WTC11 (cell line): ENCODE measurements at regions of chr3 and their contacts with region 1.

Region 1: DNA sequence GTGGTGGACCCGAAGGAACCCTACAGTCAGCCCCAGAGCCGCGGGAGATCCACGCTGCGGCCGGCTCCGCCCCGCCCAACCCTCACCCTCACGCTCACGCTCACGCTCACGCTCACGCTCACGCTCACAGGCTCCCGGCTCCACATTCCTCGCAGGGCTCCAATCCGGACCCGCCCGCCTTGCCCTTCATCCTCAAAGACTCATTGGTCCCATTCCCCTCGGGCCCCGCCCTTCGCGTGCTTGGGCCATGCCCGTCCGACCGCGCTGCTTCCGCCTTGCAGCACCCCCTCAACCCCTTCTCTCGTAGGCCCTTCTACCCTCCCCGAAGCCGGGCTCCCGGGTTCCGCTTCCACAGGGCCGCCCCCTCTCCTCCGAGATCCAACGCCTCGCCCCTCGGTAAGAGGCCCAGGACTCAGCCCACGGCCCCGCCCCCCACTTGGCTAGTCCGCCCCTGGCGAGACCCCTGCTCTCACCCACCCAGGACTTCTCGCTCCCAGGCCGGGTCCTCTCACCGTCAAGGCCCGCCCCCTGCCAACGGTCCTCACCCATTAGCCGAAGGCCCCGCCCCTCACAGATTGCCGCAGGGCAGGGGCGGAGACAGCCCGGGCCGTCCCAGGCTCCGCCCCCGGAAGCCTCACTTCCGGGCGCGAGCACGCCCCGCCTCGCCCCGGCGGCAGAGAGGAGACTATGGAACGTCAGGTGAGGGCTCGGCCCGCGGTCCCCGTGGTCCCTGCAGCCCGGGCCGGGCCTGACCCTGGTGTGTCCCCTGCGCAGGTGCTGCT is at the start of gene APEH:
- DNase-seq: peak; percentile 98
- ATAC-seq: peak; percentile 85
- H3K4me3 Mint-ChIP-seq: peak within 1 kb of the TSS; percentile 81
- H3K27ac Mint-ChIP-seq: peak within 1 kb of the TSS; percentile 94
- H3K4me1 Mint-ChIP-seq: peaks cover 21% of the 10 kb centered on the region
- H3K27me3 Mint-ChIP-seq: no peaks in the 10 kb centered on the region
- CTCF ChIP-seq: no peak
- total RNA-seq, gene APEH: 270 to 276 TPM (median 273 TPM) in 3 replicates

Region 2: DNA sequence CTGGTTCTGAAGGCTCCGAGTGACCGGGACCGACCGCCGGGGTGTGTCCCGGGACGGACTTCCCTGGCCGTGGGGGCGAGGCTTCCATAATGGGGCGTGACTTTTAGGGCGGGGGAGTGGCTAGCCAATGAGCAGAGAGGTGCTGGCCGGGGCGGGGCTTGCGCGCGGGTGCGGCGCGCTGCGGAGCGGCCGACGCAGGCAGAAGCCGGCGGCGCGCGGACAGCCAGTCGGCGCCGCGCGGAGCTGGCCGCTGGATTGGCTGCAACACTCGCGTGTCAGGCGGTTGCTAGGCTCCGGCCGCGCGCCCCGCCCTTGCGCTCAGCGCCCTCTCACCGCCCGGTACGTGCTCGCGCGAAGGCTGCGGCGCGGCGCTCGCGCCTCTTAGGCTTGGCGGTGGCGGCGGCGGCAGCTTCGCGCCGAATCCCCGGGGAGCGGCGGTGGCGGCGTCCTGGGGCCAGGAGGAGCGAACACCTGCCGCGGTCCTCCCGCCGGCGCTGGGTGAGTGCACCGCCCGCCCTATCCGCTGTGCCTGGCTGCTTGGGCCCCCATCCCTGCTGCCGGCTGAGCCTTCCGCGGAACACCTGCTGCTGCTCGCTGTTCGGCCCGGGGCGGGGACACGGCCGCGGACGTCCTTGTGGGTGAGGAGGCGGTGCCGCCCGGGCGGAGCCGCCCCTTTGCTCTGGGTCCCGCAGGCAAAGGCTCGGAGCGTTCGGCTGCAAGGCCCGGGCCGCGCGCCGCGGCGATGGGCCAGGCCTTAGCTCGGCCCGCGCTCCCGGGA is 203.8 kb before region 1 on chr3 and contains the start of gene DAG1:
- CTCF ChIA-PET with region 1: interaction called, 11 read pairs
- POLR2A ChIA-PET with region 1: no interaction called
- DNase-seq: peak; percentile 99
- ATAC-seq: peak; percentile 89
- H3K4me3 Mint-ChIP-seq: peak within 1 kb of the TSS; percentile 95
- H3K27ac Mint-ChIP-seq: peak within 1 kb of the TSS; percentile 100
- H3K4me1 Mint-ChIP-seq: peaks cover 27% of the 10 kb centered on the region
- H3K27me3 Mint-ChIP-seq: no peaks in the 10 kb centered on the region
- CTCF ChIP-seq: no peak
- total RNA-seq, gene DAG1: 113 to 119 TPM (median 115 TPM) in 3 replicates

Region 3: GRCh38 chr3:49534581-49535441 is 139.1 kb before region 1 on chr3:
- CTCF ChIA-PET with region 1: interaction called, 304 read pairs
- POLR2A ChIA-PET with region 1: interaction called, 27 read pairs
- DNase-seq: peak; percentile 73
- ATAC-seq: peak; percentile 9
- H3K4me3 Mint-ChIP-seq: no peak overlapping the region
- H3K27ac Mint-ChIP-seq: peak overlapping the region; percentile 41; the same call in 1 of the 2 replicates
- H3K4me1 Mint-ChIP-seq: peaks cover 17% of the 10 kb centered on the region
- H3K27me3 Mint-ChIP-seq: no peaks in the 10 kb centered on the region
- CTCF ChIP-seq: no peak

Region 4: DNA sequence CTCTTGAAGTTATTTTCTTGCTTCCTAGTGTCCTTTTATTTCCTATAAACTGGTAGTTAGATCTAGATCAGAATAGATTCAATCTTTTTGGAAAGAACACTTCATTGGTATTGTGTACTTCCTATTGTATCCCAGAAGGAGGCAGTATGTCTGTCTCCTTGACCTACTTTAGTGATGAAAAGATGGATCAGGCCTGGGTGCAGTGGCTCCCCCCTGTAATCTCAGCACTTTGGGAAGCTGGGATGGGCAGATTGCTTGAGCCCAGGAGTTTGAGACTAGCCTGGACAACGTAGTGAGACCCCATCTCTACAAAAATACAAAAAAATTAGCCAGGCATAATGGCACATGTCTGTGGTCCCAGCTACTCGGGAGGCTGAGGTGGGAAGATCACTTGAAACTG is 107.6 kb before region 1 on chr3:
- CTCF ChIA-PET with region 1: interaction called, 20 read pairs
- POLR2A ChIA-PET with region 1: no interaction called
- DNase-seq: no peak
- ATAC-seq: peak; percentile 46; the same call in 1 of the 2 replicates
- H3K4me3 Mint-ChIP-seq: no peak overlapping the region
- H3K27ac Mint-ChIP-seq: no peak overlapping the region
- H3K4me1 Mint-ChIP-seq: peaks cover 16% of the 10 kb centered on the region
- H3K27me3 Mint-ChIP-seq: no peaks in the 10 kb centered on the region
- CTCF ChIP-seq: no peak

Region 5: GRCh38 chr3:49703443-49703927 is 29.6 kb after region 1 on chr3:
- CTCF ChIA-PET with region 1: interaction called, 29 read pairs
- POLR2A ChIA-PET with region 1: no interaction called
- DNase-seq: peak; percentile 75
- ATAC-seq: peak; percentile 91
- H3K4me3 Mint-ChIP-seq: no peak overlapping the region
- H3K27ac Mint-ChIP-seq: no peak overlapping the region; the same call in 1 of the 2 replicates
- H3K4me1 Mint-ChIP-seq: peaks cover 16% of the 10 kb centered on the region
- H3K27me3 Mint-ChIP-seq: no peaks in the 10 kb centered on the region
- CTCF ChIP-seq: peak; percentile 70